ENCODE measurements at regions of chr15 and their contacts with region 1.

Region 1: DNA sequence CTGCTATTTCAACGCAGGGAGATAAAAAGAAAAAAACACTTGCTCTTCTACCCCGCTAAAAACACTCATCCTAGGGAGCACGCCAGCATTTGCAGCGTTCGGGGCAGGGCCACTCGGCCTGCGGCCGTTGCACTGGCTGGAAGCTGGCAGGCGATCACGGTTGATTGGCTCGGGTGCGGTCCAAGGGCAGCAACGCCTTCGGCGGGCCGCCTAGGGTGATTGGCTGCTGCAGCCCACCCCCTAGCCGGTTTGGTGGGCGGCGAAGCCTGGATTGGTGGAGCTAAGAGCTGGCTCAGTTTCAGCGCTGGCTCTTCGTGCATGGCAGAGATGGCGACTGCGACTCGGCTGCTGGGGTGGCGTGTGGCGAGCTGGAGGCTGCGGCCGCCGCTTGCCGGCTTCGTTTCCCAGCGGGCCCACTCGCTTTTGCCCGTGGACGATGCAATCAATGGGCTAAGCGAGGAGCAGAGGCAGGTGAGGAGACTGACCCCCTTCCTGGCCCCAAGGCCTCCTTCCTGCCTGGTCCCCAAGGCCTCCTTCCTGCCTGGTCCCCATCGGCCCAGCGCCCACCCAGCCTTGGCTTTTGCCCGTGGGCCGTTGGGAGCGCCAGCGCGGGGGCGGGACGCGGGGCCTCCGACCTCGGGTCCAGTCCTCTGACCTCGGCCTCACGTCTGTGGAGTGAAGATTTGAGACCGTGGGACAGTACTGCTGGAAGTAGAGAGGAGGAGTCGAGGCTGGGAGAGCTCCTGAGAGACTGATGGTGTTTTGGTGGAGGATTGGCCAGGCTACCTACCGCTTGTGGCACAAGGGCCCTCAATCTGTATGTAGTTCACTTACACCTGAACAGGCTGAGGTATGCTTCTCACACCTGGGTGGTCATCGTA is at the start of gene IVD:
- DNase-seq: peak; percentile 81 to 86 (median 85)
- H3K4me3 ChIP-seq: peak within 1 kb of the TSS; percentile 58 to 86 (median 65)
- H3K4me3 Mint-ChIP-seq: peak within 1 kb of the TSS; percentile 91 to 94
- H3K27ac ChIP-seq: peak within 1 kb of the TSS in 1 of 2 donors; percentile 83
- H3K27ac Mint-ChIP-seq: peak within 1 kb of the TSS; percentile 24 to 84 (median 63)
- H3K4me1 ChIP-seq: peaks cover 33 to 42% of the 10 kb centered on the region in 2 donors
- H3K4me1 Mint-ChIP-seq: peaks cover 43% of the 10 kb centered on the region
- H3K27me3 ChIP-seq: no peaks in the 10 kb centered on the region
- H3K27me3 Mint-ChIP-seq: peaks cover 0 to 2% (median 1%) of the 10 kb centered on the region in 3 donors
- CTCF ChIP-seq: no peak
- polyA plus RNA-seq, gene IVD: 28.6 to 46.3 (median 31.3) TPM

Region 2: DNA sequence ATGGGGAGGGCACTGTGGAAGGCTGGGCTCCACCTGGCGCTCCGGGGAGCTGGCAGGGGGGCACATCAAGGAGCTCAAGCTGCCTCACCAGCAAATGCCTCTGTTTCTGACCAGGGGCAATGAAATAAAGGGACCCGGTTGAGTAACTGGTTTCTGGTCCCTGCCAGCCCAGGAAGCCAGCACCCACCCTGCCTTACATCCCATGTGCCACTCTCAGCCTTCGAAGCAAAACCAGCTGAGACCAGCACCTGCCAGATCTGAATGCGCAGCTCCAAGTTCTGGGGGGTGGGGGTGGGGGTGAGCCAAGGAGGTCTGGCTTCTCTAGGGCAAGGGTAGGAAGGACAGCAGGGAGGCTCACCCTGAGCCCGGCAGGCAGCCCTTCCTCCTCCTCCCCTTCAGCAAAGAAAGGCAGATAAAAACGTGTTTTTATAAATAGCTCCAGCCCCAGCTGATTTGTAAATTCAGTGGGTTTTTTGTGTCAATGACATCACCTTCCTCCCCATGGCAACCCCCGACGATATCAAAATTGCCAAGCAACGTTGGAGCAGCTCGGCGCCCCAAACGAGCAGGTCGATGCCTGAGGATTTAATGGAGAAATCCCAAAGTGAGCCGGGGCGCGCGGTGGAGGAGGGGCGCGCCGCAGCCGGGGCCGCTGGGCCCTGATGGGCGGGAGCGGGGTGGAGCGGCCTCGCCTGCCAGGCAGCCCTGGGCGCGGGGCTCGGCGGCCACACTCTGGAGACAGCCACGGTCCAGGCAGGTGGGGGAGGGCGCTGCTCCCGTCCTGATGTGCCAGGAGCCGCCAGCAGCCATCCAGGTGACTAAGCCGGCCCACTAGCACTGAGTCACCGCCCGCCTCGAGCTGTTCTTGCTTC is 167.0 kb before region 1 on chr15 and contains the start of gene PAK6:
- intact Hi-C with region 1: no loop called
- DNase-seq: peak in 2 of 3 donors; percentile 31 to 54
- H3K4me3 ChIP-seq: peak within 1 kb of the TSS in 1 of 3 experiments; percentile 63
- H3K4me3 Mint-ChIP-seq: peak within 1 kb of the TSS; percentile 38 to 78
- H3K27ac ChIP-seq: no peak within 1 kb of the TSS
- H3K27ac Mint-ChIP-seq: peak within 1 kb of the TSS in 1 of 7 donors; percentile 52
- H3K4me1 ChIP-seq: peaks cover 31 to 35% of the 10 kb centered on the region in 2 donors
- H3K4me1 Mint-ChIP-seq: peaks cover 36% of the 10 kb centered on the region
- H3K27me3 ChIP-seq: peaks cover 0 to 24% of the 10 kb centered on the region in 2 donors
- H3K27me3 Mint-ChIP-seq: peaks cover 13 to 29% (median 24%) of the 10 kb centered on the region in 3 donors
- CTCF ChIP-seq: no peak
- polyA plus RNA-seq, gene PAK6: 0.03 TPM in 1 of 3 donors, not detected in the others

Region 3: GRCh38 chr15:40367686-40368611 is 37.8 kb before region 1 on chr15:
- intact Hi-C with region 1: loop called in 1 of 2 experiments (anchors 5 kb)
- DNase-seq: peak; percentile 91 to 93 (median 91)
- H3K4me3 ChIP-seq: peak overlapping the region; percentile 41 to 78 (median 62)
- H3K4me3 Mint-ChIP-seq: peak overlapping the region; percentile 76 to 91
- H3K27ac ChIP-seq: no peak overlapping the region
- H3K27ac Mint-ChIP-seq: peak overlapping the region in 5 of 7 donors; percentile 4 to 83 (median 58)
- H3K4me1 ChIP-seq: peaks cover 21 to 30% of the 10 kb centered on the region in 2 donors
- H3K4me1 Mint-ChIP-seq: peaks cover 28% of the 10 kb centered on the region
- H3K27me3 ChIP-seq: no peaks in the 10 kb centered on the region
- H3K27me3 Mint-ChIP-seq: peaks cover 2 to 12% (median 6%) of the 10 kb centered on the region in 3 donors
- CTCF ChIP-seq: peak; percentile 99

Measured in CD14-positive monocyte (primary cell).